ENCODE measurements at regions of chr7 and their contacts with region 1.

Region 1: GRCh38 chr7:28272461-28272877 is 91.9 kb upstream of the JAZF1 start:
- DNase-seq: peak in 6 of 9 experiments; percentile 23 to 64 (median 44)
- ATAC-seq: peak; percentile 29
- H3K4me3 ChIP-seq: no peak overlapping the region
- H3K4me3 Mint-ChIP-seq: peak overlapping the region; percentile 49
- H3K27ac ChIP-seq: no peak overlapping the region
- H3K27ac Mint-ChIP-seq: no peak overlapping the region
- H3K4me1 ChIP-seq: no peaks in the 10 kb centered on the region
- H3K4me1 Mint-ChIP-seq: peaks cover 3% of the 10 kb centered on the region
- H3K27me3 ChIP-seq: peaks cover 0 to 5% of the 10 kb centered on the region in 2 experiments
- H3K27me3 Mint-ChIP-seq: peaks cover 24% of the 10 kb centered on the region
- CTCF ChIP-seq: peak; percentile 45

Region 2: GRCh38 chr7:28144266-28144665 is 128.2 kb before region 1 on chr7:
- CTCF ChIA-PET with region 1: no interaction called
- POLR2A ChIA-PET with region 1: no interaction called
- intact Hi-C with region 1: loop called in 1 of 2 experiments (anchors 10 kb)
- DNase-seq: peak in 1 of 9 experiments; percentile 11
- ATAC-seq: no peak
- H3K4me3 ChIP-seq: no peak overlapping the region
- H3K4me3 Mint-ChIP-seq: no peak overlapping the region
- H3K27ac ChIP-seq: no peak overlapping the region
- H3K27ac Mint-ChIP-seq: no peak overlapping the region
- H3K4me1 ChIP-seq: no peaks in the 10 kb centered on the region
- H3K4me1 Mint-ChIP-seq: no peaks in the 10 kb centered on the region
- H3K27me3 ChIP-seq: no peaks in the 10 kb centered on the region
- H3K27me3 Mint-ChIP-seq: no peaks in the 10 kb centered on the region
- CTCF ChIP-seq: no peak

Region 3: DNA sequence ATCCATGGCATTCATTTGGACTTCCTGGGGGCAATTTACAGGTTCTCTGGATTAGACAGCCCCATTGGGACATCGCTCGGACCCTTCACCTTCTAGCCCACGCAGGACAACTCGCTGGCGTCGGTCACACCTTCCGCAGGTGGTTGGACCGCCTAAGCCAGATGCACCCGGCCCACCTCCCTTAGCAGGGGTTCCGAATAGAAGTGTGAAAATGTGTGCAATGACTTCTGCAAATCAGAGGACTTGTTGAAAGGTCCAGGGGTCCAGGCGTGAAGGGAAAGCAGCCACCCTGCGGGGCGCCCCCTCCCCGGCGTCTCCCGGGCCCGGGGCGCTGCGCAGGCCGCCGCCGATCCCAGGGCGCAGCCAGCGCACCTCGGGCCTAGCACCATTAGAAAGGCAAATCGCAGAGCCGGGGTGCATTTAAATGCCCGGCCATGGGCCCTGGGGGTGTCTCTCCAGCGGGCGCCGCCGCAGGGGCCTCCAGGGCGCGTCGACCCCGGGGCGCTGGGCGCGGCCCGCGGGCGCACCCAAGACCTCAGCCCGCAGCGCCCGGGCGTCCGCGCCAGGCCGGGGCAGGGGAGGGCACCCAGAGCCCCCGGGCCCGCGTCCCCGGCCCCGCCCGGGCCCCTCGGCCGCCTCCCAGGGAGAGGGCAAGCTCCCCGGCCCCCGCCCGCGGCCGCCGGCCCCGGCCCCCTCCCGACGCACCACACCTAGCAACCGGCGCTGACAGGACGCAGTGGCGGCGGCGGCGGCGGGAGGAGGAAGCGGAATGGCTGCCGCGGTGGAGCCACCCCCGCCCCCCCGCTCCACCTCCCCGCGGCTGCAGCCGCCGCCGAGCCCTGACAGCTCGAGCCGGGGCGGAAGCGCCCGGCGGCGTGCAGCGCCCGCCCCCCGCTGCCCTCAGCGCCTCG is 93.1 kb before region 1 on chr7:
- CTCF ChIA-PET with region 1: no interaction called
- POLR2A ChIA-PET with region 1: no interaction called
- intact Hi-C with region 1: no loop called
- DNase-seq: peak; percentile 45 to 88 (median 74)
- ATAC-seq: peak; percentile 70
- H3K4me3 ChIP-seq: peak overlapping the region; percentile 27 to 38
- H3K4me3 Mint-ChIP-seq: peak overlapping the region; percentile 82
- H3K27ac ChIP-seq: peak overlapping the region; percentile 12 to 21
- H3K27ac Mint-ChIP-seq: peak overlapping the region; percentile 60
- H3K4me1 ChIP-seq: peaks cover 7% of the 10 kb centered on the region
- H3K4me1 Mint-ChIP-seq: peaks cover 15% of the 10 kb centered on the region
- H3K27me3 ChIP-seq: no peaks in the 10 kb centered on the region
- H3K27me3 Mint-ChIP-seq: no peaks in the 10 kb centered on the region
- CTCF ChIP-seq: no peak

Region 4: GRCh38 chr7:28258240-28258639 is 14.2 kb before region 1 on chr7:
- CTCF ChIA-PET with region 1: no interaction called
- POLR2A ChIA-PET with region 1: no interaction called
- intact Hi-C with region 1: no loop called
- DNase-seq: no peak
- ATAC-seq: no peak
- H3K4me3 ChIP-seq: no peak overlapping the region
- H3K4me3 Mint-ChIP-seq: no peak overlapping the region
- H3K27ac ChIP-seq: no peak overlapping the region
- H3K27ac Mint-ChIP-seq: no peak overlapping the region
- H3K4me1 ChIP-seq: no peaks in the 10 kb centered on the region
- H3K4me1 Mint-ChIP-seq: no peaks in the 10 kb centered on the region
- H3K27me3 ChIP-seq: no peaks in the 10 kb centered on the region
- H3K27me3 Mint-ChIP-seq: peaks cover 21% of the 10 kb centered on the region
- CTCF ChIP-seq: no peak

Measured in CD8-positive, alpha-beta T cell (primary cell).